Activated CD8-positive, alpha-beta T cell treated with anti-CD3 and anti-CD28 coated beads, Interleukin-2, amount 10 ng/mL, durations not matched to agents 7 days and 5 days (primary cell): ENCODE measurements at regions of chr14 and their contacts with region 1.

Region 1: GRCh38 chr14:35687335-35687939 is 121.7 kb downstream of the RALGAPA1 start:
- DNase-seq: peak; percentile 56
- ATAC-seq: peak; percentile 68
- H3K4me3 Mint-ChIP-seq: no peak overlapping the region
- H3K27ac Mint-ChIP-seq: no peak overlapping the region
- H3K4me1 Mint-ChIP-seq: peaks cover 12% of the 10 kb centered on the region
- H3K27me3 Mint-ChIP-seq: no peaks in the 10 kb centered on the region

Region 2: GRCh38 chr14:35438910-35439713 is 248.3 kb before region 1 on chr14:
- CTCF ChIA-PET with region 1: interaction called, 17 read pairs
- POLR2A ChIA-PET with region 1: no interaction called
- DNase-seq: no peak
- ATAC-seq: peak; percentile 57
- H3K4me3 Mint-ChIP-seq: no peak overlapping the region
- H3K27ac Mint-ChIP-seq: no peak overlapping the region
- H3K4me1 Mint-ChIP-seq: peaks cover 5% of the 10 kb centered on the region
- H3K27me3 Mint-ChIP-seq: no peaks in the 10 kb centered on the region

Region 3: DNA sequence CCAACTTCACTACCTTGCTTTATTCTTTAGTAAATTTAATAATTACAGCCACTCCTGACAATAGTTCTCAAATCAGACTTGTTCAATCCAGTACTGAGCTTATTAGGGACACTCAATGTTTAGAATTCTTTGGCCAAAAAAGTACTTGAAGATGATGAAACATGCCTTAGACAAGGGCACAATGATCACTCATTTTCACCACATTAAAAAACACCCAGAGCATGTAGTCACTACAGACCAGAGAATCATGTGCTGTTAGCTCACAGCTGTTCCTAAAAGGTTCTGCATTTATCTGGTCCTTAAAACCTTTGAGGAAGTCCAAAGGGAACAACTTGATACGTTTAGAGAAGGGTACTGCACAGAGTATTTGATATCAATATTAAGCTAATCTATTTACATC is 54.8 kb before region 1 on chr14:
- CTCF ChIA-PET with region 1: no interaction called
- POLR2A ChIA-PET with region 1: no interaction called
- DNase-seq: no peak
- ATAC-seq: no peak
- H3K4me3 Mint-ChIP-seq: no peak overlapping the region
- H3K27ac Mint-ChIP-seq: no peak overlapping the region
- H3K4me1 Mint-ChIP-seq: no peaks in the 10 kb centered on the region
- H3K27me3 Mint-ChIP-seq: no peaks in the 10 kb centered on the region

Region 4: GRCh38 chr14:36426836-36427235 is 739.4 kb after region 1 on chr14:
- CTCF ChIA-PET with region 1: no interaction called
- POLR2A ChIA-PET with region 1: no interaction called
- DNase-seq: no peak
- ATAC-seq: no peak
- H3K4me3 Mint-ChIP-seq: no peak overlapping the region
- H3K27ac Mint-ChIP-seq: no peak overlapping the region
- H3K4me1 Mint-ChIP-seq: no peaks in the 10 kb centered on the region
- H3K27me3 Mint-ChIP-seq: no peaks in the 10 kb centered on the region